ENCODE measurements at regions of chr1 and their contacts with region 1.

Region 1: GRCh38 chr1:100459358-100460114 is 78.4 kb upstream of the GPR88 start:
- DNase-seq: no peak
- ATAC-seq: peak; percentile 85

Region 2: DNA sequence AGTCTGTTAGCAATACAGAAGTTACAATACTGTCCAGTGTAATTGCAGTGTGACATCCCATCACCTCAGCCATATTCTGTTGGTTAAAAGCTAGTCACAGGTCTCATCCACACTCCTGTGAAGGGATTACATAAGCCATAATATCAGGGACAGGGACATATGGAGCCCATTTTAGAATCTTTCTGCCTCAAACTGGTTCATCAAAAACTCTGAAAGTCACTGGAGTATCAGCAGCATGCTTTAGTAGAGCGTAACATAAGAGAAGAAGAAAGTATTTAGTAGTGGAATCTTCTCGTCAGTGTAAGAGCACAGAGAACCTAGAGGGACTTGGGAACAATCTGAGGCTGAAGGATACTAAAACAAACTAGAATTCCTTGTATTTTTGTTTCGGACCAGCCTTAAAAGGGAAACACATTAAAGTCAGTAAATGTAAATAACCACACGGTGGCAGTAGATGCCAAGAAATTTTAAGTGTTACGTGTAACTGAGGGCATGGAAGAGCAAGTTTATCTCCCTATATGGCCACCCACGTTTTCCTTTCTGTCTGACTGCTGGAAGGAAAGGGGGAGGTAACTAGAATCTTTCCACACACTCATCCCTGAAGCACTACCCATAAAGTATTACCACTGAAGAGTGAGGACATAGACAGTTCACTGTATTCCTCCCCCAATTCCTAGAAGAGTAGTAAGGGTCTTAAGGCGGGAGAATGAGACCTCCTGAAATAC is 651.0 kb before region 1 on chr1:
- intact Hi-C with region 1: loop called (anchors 5 kb)
- DNase-seq: no peak
- ATAC-seq: peak; percentile 84

Region 3: DNA sequence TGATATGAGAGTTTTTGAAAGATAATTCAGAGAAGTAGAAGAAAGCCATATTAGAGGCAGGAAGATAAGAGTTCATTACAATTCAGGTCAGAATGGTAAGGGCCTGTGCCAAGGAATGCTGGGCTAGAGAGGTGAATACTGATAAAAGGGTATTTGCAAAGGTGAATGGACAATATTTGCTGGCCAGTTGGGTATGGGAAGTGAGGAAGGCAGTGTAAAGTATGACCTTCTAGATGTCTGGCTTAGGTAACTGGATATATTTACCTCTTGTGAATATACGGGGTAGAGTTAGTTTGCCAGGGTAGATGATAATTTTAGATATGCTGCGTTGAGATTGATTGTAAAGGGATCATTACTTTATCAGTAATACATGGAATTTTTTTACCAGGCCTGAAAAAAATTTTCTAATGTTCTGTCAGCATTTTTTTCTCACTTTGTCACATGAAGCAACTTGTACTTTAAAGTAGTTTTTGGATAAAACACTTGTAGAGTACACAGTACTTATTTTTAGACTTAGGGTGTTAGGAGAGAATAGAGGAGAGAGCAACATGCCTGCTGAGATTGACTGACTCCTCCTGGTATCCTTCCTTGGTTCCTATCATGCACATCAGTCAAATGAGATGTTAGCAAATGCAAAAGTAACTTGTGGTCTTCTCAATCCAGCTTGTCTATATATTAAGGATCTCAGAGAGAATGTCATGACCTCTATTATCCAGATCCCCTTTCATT is 179.4 kb before region 1 on chr1:
- intact Hi-C with region 1: loop called (anchors 10 kb)
- DNase-seq: no peak
- ATAC-seq: peak; percentile 83

Region 4: DNA sequence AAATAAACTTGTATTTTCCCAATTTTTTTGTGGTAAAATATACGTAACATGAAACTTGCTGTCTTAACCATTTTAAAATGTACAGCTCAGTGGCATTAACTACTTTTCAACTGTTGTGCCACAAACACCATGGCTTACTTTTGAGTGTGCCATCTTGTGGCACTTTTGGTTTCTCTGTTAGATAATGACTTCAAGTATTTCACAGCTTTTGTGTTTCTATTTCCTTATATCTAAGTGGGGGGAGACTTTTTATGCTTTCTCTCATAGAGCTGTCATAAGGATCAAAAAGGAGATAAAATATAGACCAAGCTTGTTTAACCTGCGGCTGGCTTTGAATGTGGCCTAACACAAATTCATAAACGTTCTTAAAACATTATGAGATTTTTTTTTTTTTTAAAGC is 62.9 kb before region 1 on chr1:
- intact Hi-C with region 1: no loop called
- DNase-seq: no peak
- ATAC-seq: no peak

Region 5: DNA sequence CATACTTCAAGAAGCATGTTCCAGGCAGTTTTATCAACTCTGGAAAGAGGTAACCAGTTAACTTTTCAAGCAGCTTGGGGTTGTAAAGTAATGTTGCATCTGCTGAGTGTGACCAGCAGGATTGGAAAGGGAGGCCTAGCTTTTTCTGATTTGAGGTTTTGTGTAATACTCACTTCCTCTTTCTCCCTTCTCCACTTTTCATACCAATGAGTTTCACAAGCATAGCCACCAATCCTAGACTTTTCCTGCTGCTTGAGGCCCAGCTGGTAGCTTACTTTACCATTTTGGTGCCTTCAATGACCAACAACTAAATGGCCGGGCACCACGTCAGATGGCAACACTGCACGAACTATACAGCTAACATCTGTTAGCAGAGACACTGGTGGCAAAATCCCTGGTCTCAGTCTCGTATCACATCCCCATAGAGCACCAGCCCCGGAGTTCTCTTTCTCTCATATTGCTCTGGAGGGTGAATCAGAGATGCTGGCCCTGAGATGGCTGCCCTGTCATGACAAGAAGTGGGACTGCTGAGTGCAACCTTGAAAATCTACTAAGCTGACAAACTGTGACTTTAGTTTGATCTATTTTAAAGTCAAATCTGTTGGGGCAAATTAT is 63.6 kb after region 1 on chr1:
- intact Hi-C with region 1: no loop called
- DNase-seq: no peak
- ATAC-seq: no peak

Region 6: GRCh38 chr1:100538913-100539835 is 79.6 kb after region 1 on chr1:
- intact Hi-C with region 1: loop called (anchors 5 kb)
- DNase-seq: peak; percentile 81
- ATAC-seq: peak; percentile 57

Region 7: GRCh38 chr1:100866041-100866900 is 406.7 kb after region 1 on chr1:
- intact Hi-C with region 1: loop called (anchors 2 kb)
- DNase-seq: no peak
- ATAC-seq: peak; percentile 54